ENCODE measurements at regions of chr6 and their contacts with region 1.

Region 1: GRCh38 chr6:25788305-25788922 is 33.9 kb downstream of the SLC17A4 start:
- DNase-seq: peak; percentile 66 to 77
- H3K4me3 ChIP-seq: no peak overlapping the region
- H3K4me3 Mint-ChIP-seq: no peak overlapping the region
- H3K27ac Mint-ChIP-seq: no peak overlapping the region
- H3K4me1 ChIP-seq: no peaks in the 10 kb centered on the region
- H3K4me1 Mint-ChIP-seq: no peaks in the 10 kb centered on the region
- H3K27me3 ChIP-seq: no peaks in the 10 kb centered on the region
- H3K27me3 Mint-ChIP-seq: peaks cover 3% of the 10 kb centered on the region
- CTCF ChIP-seq: peak; percentile 46 to 73

Region 2: DNA sequence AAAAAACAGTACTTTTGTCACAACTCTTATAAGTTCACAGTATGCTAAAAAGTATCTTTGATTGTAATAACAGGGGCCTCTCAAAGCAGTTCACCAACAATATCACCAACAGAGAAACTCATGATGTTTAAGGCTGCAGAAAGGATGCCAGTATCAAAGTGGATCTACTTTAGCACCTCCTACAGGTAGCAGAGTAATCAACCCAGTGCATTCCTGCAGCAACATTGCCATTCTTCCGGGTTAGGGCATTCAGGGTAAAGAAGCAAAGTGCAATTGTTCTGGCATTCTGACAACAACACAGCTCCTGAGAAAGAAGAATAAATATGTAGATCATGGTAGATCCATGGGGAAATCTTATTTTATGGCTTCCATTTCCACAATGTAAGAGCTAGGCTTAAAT is 41.4 kb before region 1 on chr6:
- CTCF ChIA-PET with region 1: no interaction called
- POLR2A ChIA-PET with region 1: no interaction called
- intact Hi-C with region 1: no loop called
- DNase-seq: no peak
- H3K4me3 ChIP-seq: no peak overlapping the region
- H3K4me3 Mint-ChIP-seq: no peak overlapping the region
- H3K27ac Mint-ChIP-seq: no peak overlapping the region
- H3K4me1 ChIP-seq: peaks cover 27% of the 10 kb centered on the region
- H3K4me1 Mint-ChIP-seq: peaks cover 7% of the 10 kb centered on the region
- H3K27me3 ChIP-seq: no peaks in the 10 kb centered on the region
- H3K27me3 Mint-ChIP-seq: no peaks in the 10 kb centered on the region
- CTCF ChIP-seq: no peak

Region 3: DNA sequence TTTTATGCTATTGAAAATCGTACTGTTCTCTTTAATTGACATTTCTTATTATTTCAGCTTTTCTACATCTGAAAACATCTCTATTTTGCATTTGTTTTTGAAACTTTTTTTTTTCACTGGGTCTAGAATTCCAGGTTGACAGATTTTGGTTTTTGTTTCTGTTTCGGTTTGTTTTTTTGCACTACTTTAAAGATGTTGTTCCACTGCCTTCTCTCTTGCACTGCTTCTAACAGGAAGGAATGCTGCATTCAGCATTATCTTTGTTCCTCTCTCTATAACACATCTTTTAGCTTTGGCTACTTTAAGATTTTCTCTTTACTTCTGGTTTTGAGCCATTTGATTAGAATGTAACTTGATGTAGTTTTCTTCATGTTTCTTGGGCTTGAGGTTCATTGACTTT is 63.5 kb after region 1 on chr6:
- CTCF ChIA-PET with region 1: no interaction called
- POLR2A ChIA-PET with region 1: no interaction called
- intact Hi-C with region 1: no loop called
- DNase-seq: no peak
- H3K4me3 ChIP-seq: no peak overlapping the region
- H3K4me3 Mint-ChIP-seq: no peak overlapping the region
- H3K27ac Mint-ChIP-seq: no peak overlapping the region
- H3K4me1 ChIP-seq: no peaks in the 10 kb centered on the region
- H3K4me1 Mint-ChIP-seq: no peaks in the 10 kb centered on the region
- H3K27me3 ChIP-seq: no peaks in the 10 kb centered on the region
- H3K27me3 Mint-ChIP-seq: peaks cover 7% of the 10 kb centered on the region
- CTCF ChIP-seq: no peak

Region 4: DNA sequence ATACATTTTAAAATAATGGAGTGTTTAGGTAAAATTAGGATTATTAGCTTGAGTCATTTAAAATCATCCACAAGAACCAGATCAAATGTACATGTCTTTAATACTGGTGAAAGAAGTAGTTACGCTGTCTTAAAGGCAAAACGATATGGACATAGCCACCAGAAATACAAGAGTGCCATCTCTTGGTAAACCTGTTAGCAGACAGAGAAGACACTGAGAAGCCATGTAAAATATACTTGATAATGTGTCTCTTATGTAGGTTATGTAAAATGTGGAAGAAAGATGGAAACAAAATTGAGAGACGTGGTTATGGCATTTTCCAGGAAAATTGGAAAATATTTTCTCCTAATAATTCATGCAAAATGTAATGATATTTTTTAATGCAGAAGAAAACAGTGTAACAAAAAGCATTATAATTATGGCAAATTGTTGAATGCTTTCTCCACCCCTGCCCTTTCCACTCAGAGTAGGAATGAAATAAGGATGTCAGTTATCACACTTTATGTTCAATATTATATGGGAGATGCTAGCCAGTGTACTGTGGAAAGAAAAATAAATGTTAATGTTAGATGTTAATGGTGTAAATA is 154.2 kb after region 1 on chr6:
- CTCF ChIA-PET with region 1: no interaction called
- POLR2A ChIA-PET with region 1: no interaction called
- intact Hi-C with region 1: loop called (anchors 1 kb)
- DNase-seq: peak in 1 of 2 experiments; percentile 37
- H3K4me3 ChIP-seq: no peak overlapping the region
- H3K4me3 Mint-ChIP-seq: no peak overlapping the region
- H3K27ac Mint-ChIP-seq: no peak overlapping the region
- H3K4me1 ChIP-seq: peaks cover 11% of the 10 kb centered on the region; the same call in 1 of the 2 replicates
- H3K4me1 Mint-ChIP-seq: peaks cover 11% of the 10 kb centered on the region
- H3K27me3 ChIP-seq: no peaks in the 10 kb centered on the region
- H3K27me3 Mint-ChIP-seq: no peaks in the 10 kb centered on the region
- CTCF ChIP-seq: peak; percentile 47 to 65

Measured in Caco-2 (cell line).